GM12878 (cell line): ENCODE measurements at regions of chr19 and their contacts with region 1.

Region 1: DNA sequence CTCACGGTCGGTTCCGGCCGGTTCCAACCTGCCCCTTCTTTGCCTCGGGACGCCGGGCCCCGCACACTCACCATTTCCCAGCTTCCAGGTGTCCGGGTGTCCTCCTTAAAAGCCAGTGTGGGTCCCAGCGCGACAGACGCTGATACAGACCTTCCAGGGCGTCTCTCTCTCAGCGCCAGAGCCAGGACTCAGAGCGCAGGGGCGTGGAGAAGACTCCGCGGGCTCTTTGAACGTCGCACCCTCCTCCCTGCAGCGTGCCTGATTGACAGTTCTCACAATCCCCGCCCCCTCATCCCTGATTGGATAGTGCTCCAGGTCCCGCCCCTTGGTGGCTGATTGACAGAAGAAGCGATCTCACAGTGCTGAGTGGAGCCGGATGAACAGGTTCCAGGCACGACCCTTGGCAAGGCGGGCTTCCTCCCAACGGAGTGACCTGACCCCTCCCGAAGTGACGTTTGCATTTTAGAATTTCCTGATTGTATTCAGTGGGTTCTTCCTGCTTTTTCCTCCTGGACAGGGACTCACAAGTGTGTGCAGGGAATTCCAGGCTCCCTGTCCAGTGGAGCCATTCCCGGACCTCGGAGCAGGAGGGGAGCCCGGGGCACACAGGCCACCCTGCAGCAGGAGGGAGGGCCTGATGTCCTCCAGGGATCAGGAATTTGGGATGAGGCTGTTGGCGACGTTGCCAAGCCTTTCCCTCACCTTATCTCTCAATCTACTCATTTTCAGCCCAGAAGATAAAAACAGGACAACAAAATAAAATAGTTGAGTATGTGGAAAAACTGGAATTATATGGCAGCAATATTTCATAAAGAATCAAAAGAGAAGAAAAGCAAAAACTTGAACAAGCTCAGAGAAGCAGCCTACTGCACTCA is at the start of gene ZNF823:
- DNase-seq: peak; percentile 95
- ATAC-seq: peak; percentile 97
- H3K4me3 ChIP-seq: peak within 1 kb of the TSS; percentile 82
- H3K27ac ChIP-seq: peak within 1 kb of the TSS; percentile 83
- H3K4me1 ChIP-seq: no peaks in the 10 kb centered on the region; the same call in 1 of the 2 replicates
- H3K27me3 ChIP-seq: no peaks in the 10 kb centered on the region
- CTCF ChIP-seq: no peak
- EP300 ChIP-seq: no peak
- POLR2A ChIP-seq: peak; percentile 81
- RAD21 ChIP-seq: no peak
- polyA plus RNA-seq, gene ZNF823: 3.3 TPM

Region 2: GRCh38 chr19:11699931-11700794 is 38.8 kb before region 1 on chr19:
- CTCF ChIA-PET with region 1: interaction called, 13 read pairs
- POLR2A ChIA-PET with region 1: interaction called, 3 read pairs
- RAD21 ChIA-PET with region 1: interaction called, 5 read pairs
- SMC1A ChIA-PET with region 1: interaction called, 8 read pairs
- in situ Hi-C with region 1: no loop called
- intact Hi-C with region 1: no loop called
- DNase-seq: no peak
- ATAC-seq: 0 out of 3 replicates have a peak, but pooled peaks have one; percentile 19
- H3K4me3 ChIP-seq: no peak overlapping the region
- H3K27ac ChIP-seq: no peak overlapping the region
- H3K4me1 ChIP-seq: no peaks in the 10 kb centered on the region
- H3K27me3 ChIP-seq: no peaks in the 10 kb centered on the region
- CTCF ChIP-seq: peak; percentile 44 to 51 (median 50); a peak in 5 of 6 replicates
- EP300 ChIP-seq: no peak
- POLR2A ChIP-seq: no peak
- RAD21 ChIP-seq: peak; percentile 38; the same call in 1 of the 2 replicates